PC-9 (cell line): ENCODE measurements at regions of chr1 and their contacts with region 1.

Region 1: DNA sequence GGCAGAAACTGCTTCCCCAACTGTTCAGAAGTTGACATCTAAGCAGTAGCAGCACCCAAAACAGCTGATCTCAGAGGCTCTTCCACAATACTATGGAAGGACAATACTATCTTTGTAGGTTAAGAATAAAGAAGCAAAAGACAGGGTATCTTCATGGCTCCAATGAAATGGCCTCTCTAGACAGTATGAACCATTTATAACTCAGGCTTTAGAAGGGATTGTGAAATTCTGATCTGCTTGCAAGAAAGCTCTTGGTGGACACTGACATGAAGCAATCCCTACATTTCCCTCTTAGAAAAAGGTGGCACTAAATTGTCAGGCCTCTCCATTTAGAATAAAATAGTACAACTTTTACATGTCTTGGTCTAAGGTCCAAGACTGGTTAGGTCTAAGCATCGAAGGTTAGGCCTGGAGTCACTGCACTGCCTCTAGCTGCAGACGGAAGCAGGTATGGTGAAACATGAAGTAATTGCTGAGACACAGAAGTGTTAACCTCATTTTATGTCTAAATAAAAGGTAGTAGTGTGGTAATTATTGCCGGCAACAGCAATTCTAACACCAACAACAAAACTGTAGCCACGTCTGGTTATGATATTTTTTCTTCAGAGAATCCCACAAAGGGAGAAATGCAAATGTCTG is 50.6 kb upstream of the HP1BP3 start:
- DNase-seq: no peak
- H3K4me3 ChIP-seq: no peak overlapping the region
- H3K27ac ChIP-seq: no peak overlapping the region
- H3K4me1 ChIP-seq: no peaks in the 10 kb centered on the region
- H3K27me3 ChIP-seq: no peaks in the 10 kb centered on the region
- CTCF ChIP-seq: no peak

Region 2: GRCh38 chr1:20775700-20776099 is 62.0 kb before region 1 on chr1:
- CTCF ChIA-PET with region 1: no interaction called
- POLR2A ChIA-PET with region 1: interaction called, 23 read pairs
- intact Hi-C with region 1: no loop called
- DNase-seq: no peak
- H3K4me3 ChIP-seq: no peak overlapping the region
- H3K27ac ChIP-seq: no peak overlapping the region
- H3K4me1 ChIP-seq: no peaks in the 10 kb centered on the region
- H3K27me3 ChIP-seq: no peaks in the 10 kb centered on the region
- CTCF ChIP-seq: no peak